ENCODE measurements at regions of chr11 and their contacts with region 1.

Region 1: GRCh38 chr11:27857014-27857413 is 156.8 kb upstream of the BDNF start:
- DNase-seq: no peak

Region 2: DNA sequence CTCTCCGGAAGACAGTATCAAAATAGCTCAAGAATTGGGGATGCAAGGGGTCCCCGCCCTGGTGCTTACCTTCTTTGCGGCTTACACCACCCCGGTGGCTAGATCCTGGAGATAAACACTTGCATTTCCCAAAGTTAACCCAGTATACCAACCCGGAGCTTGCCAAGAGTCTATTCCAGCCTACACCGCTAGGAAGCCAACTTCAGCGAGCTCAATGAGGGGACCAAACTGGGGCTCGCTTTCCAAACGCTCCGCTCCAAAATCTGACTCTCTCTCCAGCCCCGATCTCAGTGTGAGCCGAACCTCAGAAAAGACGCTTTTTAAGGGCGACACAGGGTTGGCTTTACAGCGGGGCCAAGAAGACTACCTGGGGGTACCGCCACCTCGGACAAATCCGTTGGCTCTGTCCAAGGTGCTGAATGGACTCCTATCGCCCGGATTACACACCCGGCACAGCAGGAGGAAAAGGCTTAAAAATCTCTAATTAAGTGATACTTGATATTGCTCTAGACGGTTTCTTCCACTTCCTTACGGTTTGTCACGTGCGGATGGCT is 136.7 kb before region 1 on chr11:
- intact Hi-C with region 1: loop called in 1 of 2 experiments (anchors 10 kb)
- DNase-seq: no peak

Region 3: GRCh38 chr11:28072321-28072720 is 215.3 kb after region 1 on chr11:
- intact Hi-C with region 1: no loop called
- DNase-seq: no peak

Measured in posterior vena cava (tissue), 2 donors.